Activated T-helper 1 cell treated with anti-CD3 and anti-CD28 coated beads, Interleukin-12 subunit alpha, Interleukin-12 subunit beta, Interleukin-2, Interleukin-4 antibody, amounts not matched to agents 30 ng/mL and 10 ng/mL and 1 ng/mL, durations not matched to agents 14 hours and 24 hours and 36 hours (primary cell): ENCODE measurements at regions of chr17 and their contacts with region 1.

Region 1: DNA sequence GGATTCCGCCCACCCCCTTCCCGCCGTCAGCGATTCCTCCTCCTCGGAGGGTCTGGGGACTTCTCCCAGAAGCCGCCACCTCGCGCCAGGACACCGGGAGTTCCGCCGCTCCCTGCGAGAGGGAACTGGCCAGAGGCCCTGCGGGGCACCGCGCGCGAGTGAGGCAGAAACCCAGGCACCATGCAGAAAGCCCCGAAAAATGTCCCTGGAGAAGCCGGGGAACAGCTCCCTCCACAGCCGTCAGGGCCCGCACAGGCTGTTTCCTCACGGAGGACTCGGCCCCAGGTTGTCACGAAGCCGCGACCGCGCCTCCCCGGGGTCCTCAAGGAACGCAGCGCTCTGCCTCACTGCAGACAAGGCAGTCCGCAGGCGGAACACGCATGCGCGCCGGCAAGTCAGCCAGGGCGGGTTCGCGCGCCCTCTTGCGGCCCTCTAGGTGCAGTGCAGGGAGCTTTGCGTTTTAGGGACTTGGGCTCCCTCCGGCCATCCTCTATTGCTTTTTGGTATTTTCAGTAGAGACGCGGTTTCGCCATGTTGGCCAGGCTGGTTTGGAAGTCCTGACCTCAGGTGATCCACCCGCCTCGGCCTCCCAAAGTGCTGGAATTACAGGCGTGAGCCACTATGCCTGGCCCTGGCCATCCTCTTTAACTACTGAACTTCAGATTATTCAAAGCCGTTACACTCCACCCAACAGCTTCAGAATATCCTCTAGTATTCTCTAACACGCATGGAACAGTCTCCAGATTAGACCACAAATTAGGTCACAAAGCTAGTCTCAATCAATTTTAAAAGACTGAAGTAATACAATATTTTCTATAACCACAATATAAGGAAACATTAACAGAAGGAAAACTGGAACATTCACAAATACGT is 20.3 kb upstream of the ZNF287 start:
- DNase-seq: peak; percentile 89
- H3K4me3 Mint-ChIP-seq: peak overlapping the region; percentile 72
- H3K27ac Mint-ChIP-seq: no peak overlapping the region
- H3K4me1 Mint-ChIP-seq: peaks cover 18% of the 10 kb centered on the region
- H3K27me3 Mint-ChIP-seq: peaks cover 47% of the 10 kb centered on the region

Region 2: GRCh38 chr17:16363749-16364536 is 225.4 kb before region 1 on chr17:
- intact Hi-C with region 1: loop called (anchors 5 kb)
- DNase-seq: peak; percentile 59
- H3K4me3 Mint-ChIP-seq: no peak overlapping the region
- H3K27ac Mint-ChIP-seq: no peak overlapping the region
- H3K4me1 Mint-ChIP-seq: no peaks in the 10 kb centered on the region
- H3K27me3 Mint-ChIP-seq: peaks cover 3% of the 10 kb centered on the region

Region 3: DNA sequence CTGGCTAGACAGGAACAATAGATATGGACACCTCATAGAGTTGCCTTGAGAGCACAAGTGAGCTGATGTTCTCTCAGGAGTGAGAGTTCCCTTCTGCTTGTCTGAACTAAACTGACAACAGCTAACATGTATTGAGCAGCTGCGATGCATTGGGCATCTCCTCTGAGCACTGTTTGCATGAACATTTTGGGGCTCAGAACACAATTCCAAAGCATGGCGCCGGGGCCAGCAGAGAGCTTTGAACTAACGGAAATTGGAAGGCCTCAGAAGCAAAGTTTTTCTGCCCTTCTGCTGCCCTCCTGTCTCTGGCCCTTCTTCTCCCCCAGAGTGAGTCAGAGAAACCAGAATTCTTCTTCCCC is 135.9 kb before region 1 on chr17:
- intact Hi-C with region 1: loop called (anchors 1 kb)
- DNase-seq: no peak
- H3K4me3 Mint-ChIP-seq: no peak overlapping the region
- H3K27ac Mint-ChIP-seq: peak overlapping the region; percentile 52
- H3K4me1 Mint-ChIP-seq: peaks cover 23% of the 10 kb centered on the region
- H3K27me3 Mint-ChIP-seq: no peaks in the 10 kb centered on the region

Region 4: DNA sequence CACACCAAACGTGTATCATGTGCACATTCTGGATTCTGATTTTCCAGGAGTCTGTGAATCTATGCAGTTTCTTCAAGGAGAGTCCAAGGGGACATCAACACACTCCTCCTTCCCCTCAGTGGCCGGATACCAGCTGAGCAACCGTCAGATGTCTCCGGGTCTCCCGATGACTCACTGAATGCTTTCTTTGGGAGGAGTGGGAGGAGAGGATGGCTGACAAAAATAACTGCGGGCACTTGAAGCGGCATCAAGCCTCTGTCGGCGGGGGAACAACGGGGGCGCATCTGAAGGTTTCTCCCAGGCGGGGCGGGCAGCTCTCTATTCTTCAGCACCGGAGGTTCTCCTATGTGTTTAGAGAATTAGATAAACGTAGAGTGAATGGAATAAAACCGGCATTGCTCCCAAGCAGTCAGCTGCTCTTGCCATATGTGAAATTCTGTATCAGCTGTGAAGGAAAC is 72.7 kb before region 1 on chr17:
- intact Hi-C with region 1: no loop called
- DNase-seq: no peak
- H3K4me3 Mint-ChIP-seq: no peak overlapping the region
- H3K27ac Mint-ChIP-seq: no peak overlapping the region
- H3K4me1 Mint-ChIP-seq: peaks cover 32% of the 10 kb centered on the region
- H3K27me3 Mint-ChIP-seq: peaks cover 30% of the 10 kb centered on the region

Region 5: DNA sequence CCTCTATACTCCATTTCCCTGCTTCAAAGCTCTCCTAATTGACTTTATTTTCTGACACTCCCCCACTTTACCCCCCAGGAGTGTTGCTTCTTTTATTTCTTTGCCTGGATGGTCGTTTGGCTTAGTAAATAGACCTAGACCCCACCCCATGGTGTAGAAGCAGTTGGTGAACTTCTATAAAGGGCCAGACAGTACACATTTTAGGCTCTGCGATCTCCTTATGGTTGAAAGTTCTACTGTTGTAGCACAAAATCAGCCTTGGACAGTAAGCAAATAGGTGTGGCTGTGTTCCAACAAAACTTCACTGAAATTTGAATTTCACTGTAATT is 52.2 kb before region 1 on chr17:
- intact Hi-C with region 1: loop called (anchors 1 kb)
- DNase-seq: no peak
- H3K4me3 Mint-ChIP-seq: peak overlapping the region; percentile 91
- H3K27ac Mint-ChIP-seq: peak overlapping the region; percentile 52
- H3K4me1 Mint-ChIP-seq: peaks cover 16% of the 10 kb centered on the region
- H3K27me3 Mint-ChIP-seq: no peaks in the 10 kb centered on the region

Region 6: DNA sequence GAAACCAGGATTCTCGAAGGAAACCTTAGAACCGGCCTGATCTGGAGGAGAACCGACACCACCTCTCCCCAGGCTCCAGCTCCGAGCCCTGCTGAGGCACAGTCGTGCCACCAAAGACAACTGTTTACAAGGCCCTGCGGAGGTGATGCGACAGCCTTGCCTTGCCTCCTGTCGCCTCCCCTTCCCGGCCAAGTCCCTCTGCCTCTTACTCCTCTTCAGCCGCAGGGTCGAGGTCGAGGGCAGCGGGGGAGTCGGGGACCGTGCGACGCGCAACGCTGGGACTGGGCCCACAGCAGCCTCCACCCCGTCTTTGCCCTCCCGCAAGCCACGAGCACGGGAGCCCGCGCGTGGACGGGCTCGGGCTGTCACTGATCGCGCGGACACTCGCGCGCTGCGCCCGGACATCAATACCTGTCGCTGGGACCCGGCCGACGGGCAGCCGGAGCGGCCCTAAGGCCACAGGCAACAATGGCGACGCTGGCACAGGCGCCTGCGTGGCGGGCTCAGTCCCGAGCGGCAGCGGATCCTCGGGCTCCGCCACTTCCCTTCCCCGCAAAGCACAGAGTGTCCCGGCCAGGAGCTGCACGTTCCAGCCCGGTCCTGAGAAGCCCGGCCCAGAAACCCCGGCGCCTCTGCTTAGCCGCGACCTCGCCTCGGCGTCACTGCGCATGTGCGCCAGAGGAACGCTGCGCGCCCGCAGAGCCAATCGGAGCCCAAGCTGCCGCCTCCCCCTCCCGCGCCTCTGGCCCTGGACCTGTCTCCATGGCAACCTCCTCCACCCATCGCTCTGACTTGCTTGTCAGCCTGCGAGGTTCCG is 20.6 kb before region 1 on chr17 and contains the start of gene ZNF287:
- intact Hi-C with region 1: loop called (anchors 1 kb)
- DNase-seq: peak; percentile 90
- H3K4me3 Mint-ChIP-seq: peak within 1 kb of the TSS; percentile 86
- H3K27ac Mint-ChIP-seq: peak within 1 kb of the TSS; percentile 62
- H3K4me1 Mint-ChIP-seq: peaks cover 11% of the 10 kb centered on the region
- H3K27me3 Mint-ChIP-seq: peaks cover 4% of the 10 kb centered on the region
- total RNA-seq, gene ZNF287: 4.8 and 7.1 TPM in 2 replicates

Region 7: DNA sequence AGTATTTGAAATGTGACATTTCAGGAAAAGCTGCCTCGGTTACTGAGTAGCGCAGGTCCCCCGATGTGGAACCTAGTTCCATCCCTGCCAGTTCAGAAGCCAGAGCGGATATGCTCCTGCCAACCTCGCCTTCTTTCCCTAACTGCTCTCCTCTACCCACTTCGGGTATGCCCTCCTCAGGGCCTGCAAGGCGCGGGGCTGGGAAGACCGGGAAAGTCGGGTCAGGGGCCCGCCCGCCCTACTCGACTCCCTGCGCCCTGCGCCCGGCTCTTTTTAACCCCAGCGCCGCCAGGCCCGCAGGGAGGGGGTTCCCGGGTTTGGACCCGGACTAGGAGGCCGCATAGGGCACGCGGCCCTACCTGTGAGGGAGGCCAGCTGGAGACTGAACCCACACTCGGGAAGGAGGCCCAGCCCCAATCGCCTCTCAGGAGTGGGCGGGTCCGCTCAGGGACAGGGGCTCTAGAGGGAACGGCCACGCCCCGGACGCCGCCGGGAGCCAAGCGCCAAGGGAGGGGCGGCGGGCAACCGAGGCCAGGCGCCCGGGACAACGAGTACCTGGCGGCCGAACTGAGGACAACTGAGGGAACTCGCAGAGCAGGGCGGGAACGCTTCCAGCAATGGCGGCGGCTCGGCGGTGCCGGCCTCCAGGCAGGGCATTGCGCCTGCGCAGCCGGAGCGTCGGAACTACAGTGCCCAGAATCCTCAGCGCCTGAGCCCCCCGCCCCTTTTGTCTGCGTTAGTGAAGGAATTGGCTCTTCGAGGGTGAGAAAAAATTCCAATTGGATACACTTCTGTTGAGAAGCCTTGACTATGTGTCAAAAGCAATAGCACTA is 64.1 kb after region 1 on chr17 and contains the start of gene ZNF624:
- intact Hi-C with region 1: loop called (anchors 1 kb)
- DNase-seq: peak; percentile 80
- H3K4me3 Mint-ChIP-seq: peak within 1 kb of the TSS; percentile 87
- H3K27ac Mint-ChIP-seq: peak within 1 kb of the TSS; percentile 44
- H3K4me1 Mint-ChIP-seq: peaks cover 13% of the 10 kb centered on the region
- H3K27me3 Mint-ChIP-seq: peaks cover 2% of the 10 kb centered on the region
- total RNA-seq, gene ZNF624: 2.0 and 2.8 TPM in 2 replicates

Region 8: GRCh38 chr17:16676676-16677268 is 87.4 kb after region 1 on chr17:
- intact Hi-C with region 1: no loop called
- DNase-seq: no peak
- H3K4me3 Mint-ChIP-seq: no peak overlapping the region
- H3K27ac Mint-ChIP-seq: no peak overlapping the region
- H3K4me1 Mint-ChIP-seq: no peaks in the 10 kb centered on the region
- H3K27me3 Mint-ChIP-seq: peaks cover 8% of the 10 kb centered on the region